T-cell (primary cell): ENCODE measurements at regions of chr12 and their contacts with region 1.

Region 1: DNA sequence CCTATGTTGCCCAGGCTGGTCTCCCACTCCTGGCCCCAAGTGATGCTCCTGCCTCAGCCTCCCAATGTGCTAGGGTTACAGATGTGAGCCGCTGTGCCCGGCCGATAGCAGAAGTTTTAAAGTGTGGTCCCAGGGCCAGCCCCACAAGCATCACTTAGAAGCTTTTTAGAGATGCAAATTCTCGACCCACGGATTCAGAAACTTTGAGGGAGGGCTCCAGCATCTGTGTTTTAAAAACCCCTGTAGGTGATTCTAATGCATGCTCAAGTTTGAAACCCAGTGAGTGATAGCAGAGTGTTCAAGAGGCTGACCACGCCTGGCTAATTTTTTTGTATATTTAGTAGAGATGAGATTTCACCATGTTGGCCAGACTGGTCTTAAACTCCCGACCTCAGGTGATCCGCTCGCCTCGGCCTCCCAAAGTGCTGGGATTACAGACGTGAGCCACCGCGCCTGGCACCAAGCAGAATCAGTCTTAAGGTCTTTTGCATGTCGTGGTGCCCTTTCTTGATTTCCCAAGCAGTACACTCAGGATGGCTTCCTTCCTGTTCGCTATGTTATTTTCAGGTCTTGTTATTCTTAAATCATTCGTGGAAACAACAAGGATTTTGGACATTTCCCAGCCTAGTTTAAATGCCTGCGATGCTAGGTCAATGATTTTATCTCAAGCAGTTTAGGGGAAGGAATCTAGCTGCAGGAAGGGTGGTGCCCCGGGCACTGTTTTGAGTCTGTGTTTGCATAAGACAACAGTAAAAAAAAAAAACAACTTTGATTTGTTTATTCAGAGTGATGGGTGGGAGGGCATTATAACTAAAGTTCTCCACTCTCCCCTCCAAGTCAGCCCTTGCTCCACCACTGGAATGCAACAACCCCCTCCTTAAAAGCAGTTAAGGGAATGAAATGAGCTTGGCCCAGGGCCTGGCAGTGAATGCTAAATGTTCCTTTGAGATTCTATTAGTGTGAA is 9.2 kb upstream of the RILPL2 start:
- DNase-seq: no peak
- ATAC-seq: no peak
- H3K4me3 ChIP-seq: no peak overlapping the region
- H3K4me3 Mint-ChIP-seq: peak overlapping the region in 2 of 3 donors; percentile 34 to 53
- H3K27ac ChIP-seq: peak overlapping the region; percentile 34
- H3K27ac Mint-ChIP-seq: peak overlapping the region; percentile 86 to 90
- H3K4me1 ChIP-seq: peaks cover 4 to 34% of the 10 kb centered on the region in 2 experiments
- H3K4me1 Mint-ChIP-seq: peaks cover 31 to 35% (median 34%) of the 10 kb centered on the region in 3 donors
- H3K27me3 ChIP-seq: no peaks in the 10 kb centered on the region
- H3K27me3 Mint-ChIP-seq: no peaks in the 10 kb centered on the region

Region 2: GRCh38 chr12:123427036-123427769 is 18.5 kb before region 1 on chr12:
- CTCF ChIA-PET with region 1: interaction called in 1 of 2 experiments, 6 read pairs
- POLR2A ChIA-PET with region 1: interaction called, 3 to 13 read pairs
- DNase-seq: peak in 27 of 35 experiments; percentile 8 to 75 (median 24)
- ATAC-seq: peak; percentile 61 to 90 (median 82)
- H3K4me3 ChIP-seq: no peak overlapping the region
- H3K4me3 Mint-ChIP-seq: peak overlapping the region in 2 of 3 donors; percentile 5 to 56
- H3K27ac ChIP-seq: peak overlapping the region; percentile 92
- H3K27ac Mint-ChIP-seq: peak overlapping the region; percentile 86 to 88
- H3K4me1 ChIP-seq: peaks cover 0 to 36% of the 10 kb centered on the region in 2 experiments
- H3K4me1 Mint-ChIP-seq: peaks cover 18 to 31% (median 24%) of the 10 kb centered on the region in 3 donors
- H3K27me3 ChIP-seq: no peaks in the 10 kb centered on the region
- H3K27me3 Mint-ChIP-seq: no peaks in the 10 kb centered on the region

Region 3: GRCh38 chr12:123468562-123469185 is 23.0 kb after region 1 on chr12:
- CTCF ChIA-PET with region 1: no interaction called
- POLR2A ChIA-PET with region 1: no interaction called
- DNase-seq: peak in 1 of 35 experiments; percentile 51
- ATAC-seq: peak; percentile 64 to 81 (median 68)
- H3K4me3 ChIP-seq: no peak overlapping the region
- H3K4me3 Mint-ChIP-seq: no peak overlapping the region
- H3K27ac ChIP-seq: no peak overlapping the region
- H3K27ac Mint-ChIP-seq: peak overlapping the region; percentile 28 to 36
- H3K4me1 ChIP-seq: no peaks in the 10 kb centered on the region
- H3K4me1 Mint-ChIP-seq: peaks cover 14 to 25% (median 15%) of the 10 kb centered on the region in 3 donors
- H3K27me3 ChIP-seq: no peaks in the 10 kb centered on the region
- H3K27me3 Mint-ChIP-seq: no peaks in the 10 kb centered on the region